ENCODE measurements at regions of chr11 and their contacts with region 1.

Region 1: GRCh38 chr11:125887373-125888324 is at the start of gene HYLS1:
- DNase-seq: peak; percentile 92
- H3K4me3 ChIP-seq: peak within 1 kb of the TSS; percentile 91
- H3K27ac ChIP-seq: peak within 1 kb of the TSS; percentile 75
- H3K27me3 ChIP-seq: no peaks in the 10 kb centered on the region
- CTCF ChIP-seq: peak; percentile 25
- polyA plus RNA-seq, gene HYLS1: 5.0 and 7.0 TPM in 2 replicates

Region 2: DNA sequence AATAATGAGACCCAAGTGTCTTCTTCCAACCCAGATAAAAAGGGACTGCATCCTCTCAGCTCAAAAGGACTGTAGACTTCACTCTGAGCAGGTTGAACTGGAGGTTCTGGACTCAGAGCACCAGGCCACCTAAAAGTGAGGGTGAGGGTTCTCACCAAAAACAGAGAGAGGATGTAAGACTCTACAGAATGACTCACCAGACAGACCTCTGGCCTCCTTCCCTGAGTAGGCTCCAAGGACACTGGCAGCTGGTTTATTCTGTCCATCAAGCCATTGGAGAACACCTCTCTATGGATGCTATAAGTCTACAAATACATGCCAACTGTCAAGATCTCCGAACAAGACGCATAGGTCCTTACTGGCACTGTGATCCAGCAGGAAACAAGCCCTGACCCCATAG is 418.8 kb before region 1 on chr11:
- CTCF ChIA-PET with region 1: no interaction called
- POLR2A ChIA-PET with region 1: no interaction called
- DNase-seq: no peak
- H3K4me3 ChIP-seq: no peak overlapping the region
- H3K27ac ChIP-seq: no peak overlapping the region
- H3K27me3 ChIP-seq: no peaks in the 10 kb centered on the region
- CTCF ChIP-seq: no peak

Region 3: GRCh38 chr11:125902927-125903710 is 15.5 kb after region 1 on chr11 and contains the start of gene PUS3:
- CTCF ChIA-PET with region 1: interaction called, 4 read pairs
- POLR2A ChIA-PET with region 1: interaction called, 16 read pairs
- DNase-seq: peak; percentile 48
- H3K4me3 ChIP-seq: peak within 1 kb of the TSS; percentile 83
- H3K27ac ChIP-seq: peak within 1 kb of the TSS; percentile 55
- H3K27me3 ChIP-seq: peaks cover 22% of the 10 kb centered on the region
- CTCF ChIP-seq: no peak
- polyA plus RNA-seq, gene PUS3: 9.5 and 13.2 TPM in 2 replicates

Region 4: GRCh38 chr11:126246636-126247035 is 359.0 kb after region 1 on chr11:
- CTCF ChIA-PET with region 1: no interaction called
- POLR2A ChIA-PET with region 1: no interaction called
- DNase-seq: no peak
- H3K4me3 ChIP-seq: no peak overlapping the region
- H3K27ac ChIP-seq: peak overlapping the region; percentile 39
- H3K27me3 ChIP-seq: no peaks in the 10 kb centered on the region
- CTCF ChIP-seq: no peak

Measured in AG04450 (cell line).